ENCODE measurements at regions of chr11 and their contacts with region 1.

Region 1: GRCh38 chr11:78645226-78646202 is 70.8 kb upstream of the NARS2 start:
- DNase-seq: peak; percentile 58
- H3K4me3 ChIP-seq: no peak overlapping the region
- H3K27ac ChIP-seq: no peak overlapping the region
- H3K4me1 ChIP-seq: no peaks in the 10 kb centered on the region
- H3K27me3 ChIP-seq: peaks cover 43% of the 10 kb centered on the region
- CTCF ChIP-seq: peak; percentile 98

Region 2: GRCh38 chr11:79076526-79077115 is 431.1 kb after region 1 on chr11:
- intact Hi-C with region 1: loop called (anchors 2 kb)
- DNase-seq: peak; percentile 50
- H3K4me3 ChIP-seq: no peak overlapping the region
- H3K27ac ChIP-seq: no peak overlapping the region
- H3K4me1 ChIP-seq: no peaks in the 10 kb centered on the region
- H3K27me3 ChIP-seq: no peaks in the 10 kb centered on the region
- CTCF ChIP-seq: peak; percentile 76

Region 3: GRCh38 chr11:79493555-79494171 is 848.1 kb after region 1 on chr11:
- intact Hi-C with region 1: loop called (anchors 5 kb)
- DNase-seq: peak; percentile 59
- H3K4me3 ChIP-seq: no peak overlapping the region
- H3K27ac ChIP-seq: no peak overlapping the region
- H3K4me1 ChIP-seq: no peaks in the 10 kb centered on the region
- H3K27me3 ChIP-seq: peaks cover 4% of the 10 kb centered on the region
- CTCF ChIP-seq: peak; percentile 89